ENCODE measurements at regions of chr6 and their contacts with region 1.

Region 1: GRCh38 chr6:112760831-112761230 is 413.7 kb downstream of the RFPL4B start:
- DNase-seq: no peak
- H3K4me3 ChIP-seq: no peak overlapping the region
- H3K27ac ChIP-seq: no peak overlapping the region
- H3K4me1 ChIP-seq: no peaks in the 10 kb centered on the region
- H3K27me3 ChIP-seq: no peaks in the 10 kb centered on the region
- CTCF ChIP-seq: no peak
- EP300 ChIP-seq: no peak
- POLR2A ChIP-seq: no peak

Region 2: DNA sequence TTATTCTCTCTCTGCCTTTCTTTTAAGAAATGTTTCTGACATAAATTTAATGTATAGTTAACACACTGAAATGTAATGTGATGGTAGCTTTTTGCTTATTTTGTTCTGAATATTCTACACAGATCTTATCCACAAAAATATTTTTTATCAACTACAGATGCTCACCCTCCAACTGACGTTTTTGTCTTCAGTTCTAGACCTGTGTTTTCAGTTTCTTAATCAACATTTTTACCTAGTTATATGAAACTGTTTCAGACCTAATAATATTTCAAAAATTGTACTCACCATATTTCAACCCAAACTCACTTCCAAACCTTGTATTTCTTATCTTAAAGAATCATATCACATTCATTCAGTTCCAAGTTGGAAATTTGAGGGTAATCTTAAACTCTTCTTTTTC is 39.1 kb after region 1 on chr6:
- intact Hi-C with region 1: loop called (anchors 2 kb)
- DNase-seq: no peak
- H3K4me3 ChIP-seq: no peak overlapping the region
- H3K27ac ChIP-seq: no peak overlapping the region
- H3K4me1 ChIP-seq: no peaks in the 10 kb centered on the region
- H3K27me3 ChIP-seq: no peaks in the 10 kb centered on the region
- CTCF ChIP-seq: no peak
- EP300 ChIP-seq: no peak
- POLR2A ChIP-seq: no peak